ENCODE measurements at regions of chr6 and their contacts with region 1.

Region 1: GRCh38 chr6:70955441-70956190 is 1.2 kb downstream of the B3GAT2 start:
- DNase-seq: peak; percentile 65
- H3K4me3 ChIP-seq: peak overlapping the region in 2 of 3 experiments; percentile 13 to 31
- H3K27ac ChIP-seq: no peak overlapping the region
- H3K4me1 ChIP-seq: peaks cover 14% of the 10 kb centered on the region
- H3K27me3 ChIP-seq: peaks cover 36 to 72% of the 10 kb centered on the region in 2 experiments
- CTCF ChIP-seq: peak; percentile 84 to 94
- POLR2A ChIP-seq: no peak

Region 2: GRCh38 chr6:70520575-70520974 is 435.0 kb before region 1 on chr6:
- CTCF ChIA-PET with region 1: interaction called, 44 read pairs
- POLR2A ChIA-PET with region 1: no interaction called
- dilution Hi-C with region 1: no loop called
- intact Hi-C with region 1: no loop called
- DNase-seq: peak; percentile 13
- H3K4me3 ChIP-seq: no peak overlapping the region
- H3K27ac ChIP-seq: no peak overlapping the region
- H3K4me1 ChIP-seq: no peaks in the 10 kb centered on the region
- H3K27me3 ChIP-seq: no peaks in the 10 kb centered on the region
- CTCF ChIP-seq: peak in 1 of 2 donors; percentile 4
- POLR2A ChIP-seq: no peak

Region 3: GRCh38 chr6:70706491-70707123 is 249.0 kb before region 1 on chr6:
- CTCF ChIA-PET with region 1: interaction called, 61 read pairs
- POLR2A ChIA-PET with region 1: no interaction called
- dilution Hi-C with region 1: no loop called
- intact Hi-C with region 1: loop called (anchors 1 kb)
- DNase-seq: peak; percentile 60
- H3K4me3 ChIP-seq: no peak overlapping the region
- H3K27ac ChIP-seq: no peak overlapping the region
- H3K4me1 ChIP-seq: peaks cover 10% of the 10 kb centered on the region
- H3K27me3 ChIP-seq: no peaks in the 10 kb centered on the region
- CTCF ChIP-seq: peak; percentile 23 to 30
- POLR2A ChIP-seq: no peak

Region 4: GRCh38 chr6:71107911-71108420 is 152.3 kb after region 1 on chr6:
- CTCF ChIA-PET with region 1: no interaction called
- POLR2A ChIA-PET with region 1: no interaction called
- dilution Hi-C with region 1: no loop called
- intact Hi-C with region 1: no loop called
- DNase-seq: peak; percentile 81
- H3K4me3 ChIP-seq: peak overlapping the region in 1 of 3 experiments; percentile 22
- H3K27ac ChIP-seq: no peak overlapping the region
- H3K4me1 ChIP-seq: peaks cover 8% of the 10 kb centered on the region
- H3K27me3 ChIP-seq: peaks cover 0 to 2% of the 10 kb centered on the region in 2 experiments
- CTCF ChIP-seq: no peak
- POLR2A ChIP-seq: no peak

Measured in endothelial cell of umbilical vein (primary cell).